ENCODE measurements at regions of chr16 and their contacts with region 1.

Region 1: DNA sequence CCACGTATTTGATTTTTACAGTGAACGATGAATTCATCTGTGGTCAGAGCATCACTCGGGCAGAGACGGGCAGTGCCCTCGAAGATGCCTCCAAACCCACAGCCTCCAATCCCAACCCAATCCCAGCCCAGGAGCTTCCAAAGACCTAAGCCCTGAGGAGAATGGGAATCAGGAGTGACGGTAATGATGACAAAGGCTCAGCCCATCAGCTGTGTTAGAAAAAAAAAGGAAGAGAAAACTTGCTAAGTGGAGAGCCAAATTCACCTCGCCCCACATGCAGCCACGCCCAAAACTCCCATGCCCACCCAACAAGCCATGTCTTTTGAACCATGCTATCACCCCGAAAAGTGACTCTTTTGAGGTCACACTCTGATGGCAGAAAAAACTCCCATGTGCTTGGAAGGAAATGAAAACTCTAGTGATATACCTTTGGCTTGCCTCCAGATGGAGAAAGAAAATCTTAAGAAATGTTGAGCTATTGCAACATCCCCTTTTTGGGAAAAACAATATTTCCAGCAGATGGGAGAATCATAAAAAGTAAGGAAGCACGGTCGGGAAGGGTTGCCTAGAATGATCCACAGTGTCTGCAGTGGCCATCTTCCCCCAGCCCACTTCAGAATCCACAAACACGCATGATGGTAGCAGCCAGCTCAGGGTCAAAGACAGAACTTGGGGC is 37.7 kb downstream of the XYLT1 start:
- DNase-seq: peak in 1 of 3 donors; percentile 65
- ATAC-seq: peak; percentile 33 to 54
- H3K4me3 ChIP-seq: no peak overlapping the region
- H3K27ac ChIP-seq: peak overlapping the region; percentile 59
- H3K4me1 ChIP-seq: peaks cover 12% of the 10 kb centered on the region
- H3K27me3 ChIP-seq: no peaks in the 10 kb centered on the region

Region 2: GRCh38 chr16:17369421-17370222 is 63.4 kb before region 1 on chr16:
- intact Hi-C with region 1: loop called in 1 of 4 experiments (anchors 10 kb)
- DNase-seq: peak; percentile 55 to 85 (median 80)
- ATAC-seq: peak; percentile 80 to 85
- H3K4me3 ChIP-seq: no peak overlapping the region
- H3K27ac ChIP-seq: peak overlapping the region; percentile 36
- H3K4me1 ChIP-seq: peaks cover 4% of the 10 kb centered on the region
- H3K27me3 ChIP-seq: no peaks in the 10 kb centered on the region

Measured in right cardiac atrium (tissue), 5 donors.